GM13976 (cell line): ENCODE measurements at regions of chr22 and their contacts with region 1.

Region 1: DNA sequence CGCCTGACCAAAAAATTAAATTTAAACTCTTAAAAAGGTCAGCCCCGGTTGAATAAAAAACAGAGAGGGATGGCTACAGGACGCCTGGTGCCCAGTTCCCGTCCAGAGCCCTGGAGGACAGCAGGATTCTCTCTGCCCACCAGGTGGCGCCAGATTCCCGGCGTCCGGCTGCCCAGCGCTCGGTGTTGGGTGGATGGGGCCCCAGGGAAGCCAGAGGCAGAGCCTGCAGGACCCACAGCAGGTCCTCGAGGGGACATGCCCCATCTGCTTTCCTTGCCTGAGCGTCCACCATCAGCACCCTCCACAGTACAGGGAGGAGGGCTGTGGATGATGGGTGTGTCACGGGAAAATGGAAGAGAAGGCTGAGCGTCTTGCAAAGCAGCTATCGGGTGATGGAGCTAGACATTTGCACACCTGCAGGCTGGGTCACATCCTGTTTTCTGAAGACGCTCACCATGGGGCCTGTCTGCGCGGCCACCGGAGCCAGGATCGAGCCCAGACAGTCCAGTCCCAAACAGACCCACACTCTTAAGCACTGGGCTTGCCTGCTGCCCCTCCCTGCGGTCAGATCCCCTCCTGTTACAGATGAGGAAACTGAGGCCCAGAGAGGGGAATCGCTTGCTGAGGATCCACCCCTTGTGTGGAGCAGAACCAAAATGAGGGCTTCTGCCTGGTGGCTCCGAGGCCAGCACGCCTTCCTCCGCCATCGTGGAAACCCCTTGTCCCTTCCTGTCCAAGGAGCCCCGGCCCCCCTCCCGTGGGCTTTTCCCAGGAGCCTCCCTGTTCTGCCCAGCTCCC is 18.5 kb upstream of the CBX7 start:
- DNase-seq: peak; percentile 88
- CTCF ChIP-seq: peak; percentile 93

Region 2: DNA sequence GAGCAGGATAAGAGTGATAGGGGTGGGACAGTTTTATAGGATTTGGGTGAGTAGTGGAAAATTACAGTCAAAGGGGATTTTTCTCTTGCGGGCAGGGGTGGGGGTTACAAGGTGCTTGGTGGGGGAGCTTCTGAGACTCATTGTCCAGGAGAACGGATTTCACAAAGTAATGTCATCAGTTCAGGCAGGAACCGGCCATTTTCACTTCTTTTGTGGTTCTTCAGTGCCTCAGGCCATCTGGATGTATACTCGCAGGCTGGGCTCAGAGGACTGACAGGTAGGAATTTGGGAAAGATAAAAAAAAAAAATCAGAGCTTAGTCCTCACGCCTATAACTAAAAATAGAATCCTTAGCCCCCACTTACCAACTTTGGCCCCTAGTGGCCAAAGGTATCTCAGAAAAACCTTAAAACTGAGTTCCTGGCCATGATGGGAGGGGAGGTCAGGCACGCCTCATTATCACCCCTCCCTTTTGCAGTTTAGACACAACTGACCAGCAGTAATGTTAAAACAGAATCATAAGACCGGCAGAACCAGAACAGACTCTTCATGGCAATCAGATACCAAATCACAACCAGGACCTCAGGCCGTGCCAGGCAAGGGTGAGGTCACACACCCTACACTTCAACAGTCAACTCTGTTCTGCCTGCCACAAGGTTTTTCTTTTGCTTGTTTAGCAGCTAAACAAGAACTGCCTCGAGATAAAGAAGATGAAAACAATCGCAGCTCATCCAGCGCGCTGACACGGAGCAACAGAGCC is 102.8 kb before region 1 on chr22:
- in situ Hi-C with region 1: no loop called
- DNase-seq: no peak
- CTCF ChIP-seq: no peak

Region 3: GRCh38 chr22:39309881-39310714 is 139.1 kb after region 1 on chr22:
- in situ Hi-C with region 1: loop called (anchors 5 kb)
- DNase-seq: no peak
- CTCF ChIP-seq: no peak